Activated CD4-positive, alpha-beta memory T cell treated with anti-CD3 and anti-CD28 coated beads, Interleukin-2, amount 10 ng/mL, durations not matched to agents 7 days and 5 days (primary cell): ENCODE measurements at regions of chr3 and their contacts with region 1.

Region 1: GRCh38 chr3:59575113-59576001 is 525.5 kb upstream of the CFAP20DC start:
- DNase-seq: peak; percentile 84
- H3K4me3 Mint-ChIP-seq: no peak overlapping the region
- H3K27ac Mint-ChIP-seq: no peak overlapping the region
- H3K4me1 Mint-ChIP-seq: no peaks in the 10 kb centered on the region
- H3K27me3 Mint-ChIP-seq: no peaks in the 10 kb centered on the region

Region 2: DNA sequence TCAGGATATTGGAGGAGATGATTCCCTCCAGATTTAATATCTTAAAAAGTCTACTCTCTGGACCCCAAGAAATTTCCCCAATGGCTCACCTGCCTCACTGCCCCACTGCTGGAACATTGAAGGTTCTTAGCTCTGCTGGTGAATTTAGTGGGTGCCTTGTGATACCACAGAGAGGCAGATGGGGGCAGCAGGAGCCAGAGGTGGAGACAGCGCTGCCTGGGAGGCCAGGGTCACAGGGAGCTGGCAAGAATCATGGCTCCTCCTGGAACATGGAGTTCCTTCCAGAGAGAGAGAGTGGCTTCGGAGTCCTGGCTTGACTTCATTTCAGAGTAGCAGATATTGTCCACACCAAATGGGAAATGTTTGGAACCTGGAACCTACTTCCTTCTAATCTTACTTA is 262.0 kb before region 1 on chr3:
- CTCF ChIA-PET with region 1: interaction called, 11 read pairs
- POLR2A ChIA-PET with region 1: no interaction called
- DNase-seq: peak; percentile 48
- H3K4me3 Mint-ChIP-seq: no peak overlapping the region
- H3K27ac Mint-ChIP-seq: no peak overlapping the region
- H3K4me1 Mint-ChIP-seq: peaks cover 10% of the 10 kb centered on the region
- H3K27me3 Mint-ChIP-seq: no peaks in the 10 kb centered on the region